Caco-2 (cell line): ENCODE measurements at regions of chr15 and their contacts with region 1.

Region 1: DNA sequence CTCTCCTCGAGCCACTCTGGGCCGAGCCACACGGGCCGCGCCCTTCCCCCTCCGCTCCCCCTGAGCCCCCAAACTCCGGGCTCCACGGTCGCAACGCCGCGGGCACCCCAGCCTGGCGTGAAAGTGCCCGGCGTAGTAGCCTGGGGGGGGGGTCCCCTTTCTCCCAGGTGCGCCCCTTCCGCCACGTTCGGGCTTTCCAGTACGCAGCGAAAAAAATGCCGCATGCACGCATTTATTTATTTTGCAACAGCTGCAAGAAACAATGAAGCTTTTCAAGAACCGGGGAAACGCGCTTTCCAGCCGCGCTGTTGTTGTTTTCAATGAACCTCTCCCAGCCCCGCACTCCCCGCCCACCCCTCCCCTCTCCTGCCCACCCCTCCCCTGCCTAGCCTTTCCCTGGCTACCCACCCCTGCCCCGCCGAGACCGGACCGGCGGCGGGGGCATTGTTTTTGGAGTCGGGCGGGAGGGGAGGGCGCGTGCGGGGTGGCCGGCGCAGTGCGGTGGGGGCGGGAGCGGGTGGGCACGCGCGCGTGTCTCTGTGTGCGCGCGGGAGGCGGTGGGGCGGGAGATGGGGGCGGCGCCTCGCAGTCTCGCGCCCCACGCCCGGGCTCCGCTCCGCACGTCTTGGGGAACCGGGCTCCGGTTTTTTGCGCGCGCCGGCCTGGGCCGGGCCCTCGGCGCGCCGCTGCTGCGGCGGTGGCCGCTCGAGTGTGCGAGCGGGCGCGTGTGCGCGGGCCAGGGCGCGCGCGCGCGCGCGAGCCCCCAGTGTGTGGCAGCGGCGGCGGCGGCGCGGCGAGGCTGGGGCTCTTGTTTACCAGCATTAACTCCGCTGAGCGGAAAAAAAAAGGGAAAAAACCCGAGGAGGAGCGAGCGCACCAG is at the start of gene IGF1R:
- DNase-seq: peak; percentile 81 to 93
- H3K4me3 ChIP-seq: peak within 1 kb of the TSS; percentile 83
- H3K4me3 Mint-ChIP-seq: peak within 1 kb of the TSS; percentile 93
- H3K27ac Mint-ChIP-seq: peak within 1 kb of the TSS; percentile 91
- H3K4me1 ChIP-seq: peaks cover 17% of the 10 kb centered on the region
- H3K4me1 Mint-ChIP-seq: peaks cover 11% of the 10 kb centered on the region
- H3K27me3 ChIP-seq: no peaks in the 10 kb centered on the region
- H3K27me3 Mint-ChIP-seq: peaks cover 5% of the 10 kb centered on the region
- CTCF ChIP-seq: no peak
- total RNA-seq, gene IGF1R: 51.6 and 57.4 TPM in 2 replicates

Region 2: DNA sequence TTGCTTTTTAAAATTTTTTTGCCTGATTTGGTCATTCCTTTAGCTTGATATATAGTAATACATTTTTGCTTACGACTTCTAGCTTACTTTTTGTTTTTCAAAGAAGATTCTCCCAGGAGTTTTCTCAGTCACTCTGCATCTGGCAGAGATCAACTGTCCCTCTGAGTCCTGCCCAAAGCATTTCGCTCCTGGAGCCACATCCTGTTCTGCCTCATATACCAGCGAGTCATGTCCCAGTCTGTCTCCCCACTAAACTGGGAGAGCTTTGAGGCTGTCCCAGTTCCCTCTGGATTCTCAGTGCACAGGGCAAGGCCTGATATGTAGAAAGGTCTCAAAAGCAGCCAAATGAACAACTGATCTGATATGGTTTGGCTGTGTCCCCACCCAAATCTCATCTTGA is 361.2 kb before region 1 on chr15:
- CTCF ChIA-PET with region 1: no interaction called
- POLR2A ChIA-PET with region 1: no interaction called
- intact Hi-C with region 1: no loop called
- DNase-seq: no peak
- H3K4me3 ChIP-seq: no peak overlapping the region
- H3K4me3 Mint-ChIP-seq: no peak overlapping the region
- H3K27ac Mint-ChIP-seq: no peak overlapping the region
- H3K4me1 ChIP-seq: no peaks in the 10 kb centered on the region
- H3K4me1 Mint-ChIP-seq: no peaks in the 10 kb centered on the region
- H3K27me3 ChIP-seq: no peaks in the 10 kb centered on the region
- H3K27me3 Mint-ChIP-seq: peaks cover 7% of the 10 kb centered on the region
- CTCF ChIP-seq: no peak

Region 3: DNA sequence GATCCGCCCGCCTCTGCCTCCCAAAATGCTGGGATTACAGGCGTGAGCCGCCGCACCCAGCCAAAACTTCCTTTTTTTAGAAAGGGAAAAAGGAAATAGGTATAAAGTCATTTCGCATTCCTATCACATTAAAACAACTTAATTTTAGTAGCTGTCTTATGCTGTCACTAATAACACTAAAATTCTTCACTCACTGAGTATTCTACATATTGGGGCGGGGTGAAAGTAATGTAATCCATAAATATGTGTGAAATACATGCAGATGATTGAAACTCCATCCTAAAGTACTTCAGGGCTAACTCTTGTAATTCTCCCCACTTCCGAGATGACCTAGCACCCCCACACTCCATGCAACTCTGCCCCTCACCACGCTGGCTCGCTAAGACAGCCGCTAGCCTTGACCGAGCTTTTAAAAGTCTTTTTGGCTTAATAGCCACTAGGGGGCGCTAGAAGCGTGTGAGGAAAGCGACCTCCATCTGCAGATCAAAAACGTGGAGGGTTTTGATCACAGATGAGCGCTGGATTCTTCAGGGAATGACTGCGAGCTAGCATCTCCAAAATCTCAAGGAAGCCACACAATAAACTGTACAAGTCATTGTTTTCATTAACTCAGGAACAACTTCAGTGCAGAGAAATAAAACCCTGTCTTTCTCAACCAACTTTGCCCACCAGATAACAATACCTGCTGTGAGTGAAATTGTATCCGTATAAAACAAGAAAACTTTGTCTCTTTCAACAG is 129.0 kb before region 1 on chr15:
- CTCF ChIA-PET with region 1: interaction called, 12 read pairs
- POLR2A ChIA-PET with region 1: no interaction called
- intact Hi-C with region 1: loop called (anchors 1 kb)
- DNase-seq: peak; percentile 55 to 70
- H3K4me3 ChIP-seq: no peak overlapping the region
- H3K4me3 Mint-ChIP-seq: no peak overlapping the region
- H3K27ac Mint-ChIP-seq: no peak overlapping the region
- H3K4me1 ChIP-seq: no peaks in the 10 kb centered on the region
- H3K4me1 Mint-ChIP-seq: peaks cover under 1% of the 10 kb centered on the region
- H3K27me3 ChIP-seq: no peaks in the 10 kb centered on the region
- H3K27me3 Mint-ChIP-seq: peaks cover 5% of the 10 kb centered on the region
- CTCF ChIP-seq: peak; percentile 78

Region 4: DNA sequence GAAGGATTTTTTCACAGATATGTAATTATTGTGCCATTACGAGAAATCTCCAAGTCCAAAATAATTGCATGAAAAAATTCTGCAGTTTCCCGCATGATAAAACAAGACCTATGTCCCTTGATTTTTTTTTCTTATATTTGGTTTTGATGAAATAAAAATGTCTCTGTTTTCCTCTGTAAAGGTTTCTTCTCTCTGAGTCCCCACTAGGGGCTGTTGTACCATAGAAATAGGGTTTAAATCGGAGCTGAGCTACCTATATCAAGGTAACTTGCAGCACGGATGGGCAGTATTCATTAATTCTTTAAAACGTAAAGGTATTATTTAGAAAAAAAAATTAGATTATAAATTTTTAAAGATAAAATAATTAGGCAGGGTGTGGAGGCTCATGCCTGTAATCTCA is 66.3 kb before region 1 on chr15:
- CTCF ChIA-PET with region 1: interaction called, 4 read pairs
- POLR2A ChIA-PET with region 1: no interaction called
- intact Hi-C with region 1: loop called (anchors 1 kb)
- DNase-seq: peak in 1 of 2 experiments; percentile 7
- H3K4me3 ChIP-seq: no peak overlapping the region
- H3K4me3 Mint-ChIP-seq: no peak overlapping the region
- H3K27ac Mint-ChIP-seq: no peak overlapping the region
- H3K4me1 ChIP-seq: no peaks in the 10 kb centered on the region
- H3K4me1 Mint-ChIP-seq: no peaks in the 10 kb centered on the region
- H3K27me3 ChIP-seq: no peaks in the 10 kb centered on the region; the same call in 1 of the 2 replicates
- H3K27me3 Mint-ChIP-seq: peaks cover 20% of the 10 kb centered on the region
- CTCF ChIP-seq: peak; percentile 33 to 49

Region 5: DNA sequence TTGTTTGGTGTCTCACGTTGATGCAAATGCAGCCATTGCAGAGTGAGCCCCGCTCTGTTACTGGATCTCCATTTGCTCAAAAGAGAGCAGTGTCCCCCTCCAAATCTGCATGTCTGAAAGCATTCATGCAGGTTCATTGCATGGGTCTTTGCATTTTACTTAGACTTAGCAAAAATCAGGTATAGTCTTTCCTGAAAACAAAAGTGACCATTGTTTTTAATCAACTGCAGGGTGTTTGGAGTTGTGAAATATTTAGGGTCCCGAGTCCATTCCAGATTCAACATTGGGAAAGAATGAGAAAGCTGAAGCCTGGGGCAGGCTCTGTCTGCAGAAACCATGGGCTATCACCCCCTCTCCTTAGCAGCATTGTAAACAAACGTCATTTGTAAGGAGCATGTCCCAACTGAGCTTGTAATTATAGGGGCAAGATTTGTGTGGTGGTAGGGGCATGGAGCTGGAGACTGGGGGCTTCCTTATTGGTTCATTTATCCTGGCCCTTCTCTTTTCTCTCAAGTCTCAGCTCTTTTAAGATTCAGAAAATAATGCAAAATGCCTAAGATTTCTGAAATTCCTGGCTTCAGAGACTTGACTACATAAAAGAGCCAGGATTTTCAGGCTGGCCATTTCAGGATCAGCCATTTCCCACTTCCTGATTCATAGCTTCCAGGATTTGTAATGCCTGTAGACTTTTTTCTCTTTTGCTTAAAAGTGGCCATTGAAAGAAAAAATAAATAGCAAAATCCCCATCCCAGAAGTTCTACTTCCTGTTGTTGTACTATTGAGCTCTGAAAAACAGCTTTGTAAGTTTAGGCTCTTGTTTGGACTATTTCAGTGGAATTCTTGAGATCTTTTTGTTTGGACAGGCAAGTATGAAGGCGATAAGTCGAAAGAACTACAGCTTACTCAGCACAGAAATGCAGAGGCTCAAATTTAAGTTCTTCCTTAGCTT is 23.3 kb after region 1 on chr15:
- CTCF ChIA-PET with region 1: no interaction called
- POLR2A ChIA-PET with region 1: interaction called, 3 read pairs
- intact Hi-C with region 1: loop called (anchors 2 kb)
- DNase-seq: peak in 1 of 2 experiments; percentile 60
- H3K4me3 ChIP-seq: no peak overlapping the region
- H3K4me3 Mint-ChIP-seq: peak overlapping the region; percentile 56
- H3K27ac Mint-ChIP-seq: peak overlapping the region; percentile 82
- H3K4me1 ChIP-seq: peaks cover 68% of the 10 kb centered on the region
- H3K4me1 Mint-ChIP-seq: peaks cover 42% of the 10 kb centered on the region
- H3K27me3 ChIP-seq: no peaks in the 10 kb centered on the region
- H3K27me3 Mint-ChIP-seq: no peaks in the 10 kb centered on the region
- CTCF ChIP-seq: no peak

Region 6: GRCh38 chr15:98785807-98786621 is 138.0 kb after region 1 on chr15:
- CTCF ChIA-PET with region 1: no interaction called
- POLR2A ChIA-PET with region 1: no interaction called
- intact Hi-C with region 1: no loop called
- DNase-seq: no peak
- H3K4me3 ChIP-seq: no peak overlapping the region
- H3K4me3 Mint-ChIP-seq: no peak overlapping the region
- H3K27ac Mint-ChIP-seq: no peak overlapping the region
- H3K4me1 ChIP-seq: peaks cover 36% of the 10 kb centered on the region
- H3K4me1 Mint-ChIP-seq: peaks cover 24% of the 10 kb centered on the region
- H3K27me3 ChIP-seq: no peaks in the 10 kb centered on the region
- H3K27me3 Mint-ChIP-seq: no peaks in the 10 kb centered on the region
- CTCF ChIP-seq: no peak

Region 7: DNA sequence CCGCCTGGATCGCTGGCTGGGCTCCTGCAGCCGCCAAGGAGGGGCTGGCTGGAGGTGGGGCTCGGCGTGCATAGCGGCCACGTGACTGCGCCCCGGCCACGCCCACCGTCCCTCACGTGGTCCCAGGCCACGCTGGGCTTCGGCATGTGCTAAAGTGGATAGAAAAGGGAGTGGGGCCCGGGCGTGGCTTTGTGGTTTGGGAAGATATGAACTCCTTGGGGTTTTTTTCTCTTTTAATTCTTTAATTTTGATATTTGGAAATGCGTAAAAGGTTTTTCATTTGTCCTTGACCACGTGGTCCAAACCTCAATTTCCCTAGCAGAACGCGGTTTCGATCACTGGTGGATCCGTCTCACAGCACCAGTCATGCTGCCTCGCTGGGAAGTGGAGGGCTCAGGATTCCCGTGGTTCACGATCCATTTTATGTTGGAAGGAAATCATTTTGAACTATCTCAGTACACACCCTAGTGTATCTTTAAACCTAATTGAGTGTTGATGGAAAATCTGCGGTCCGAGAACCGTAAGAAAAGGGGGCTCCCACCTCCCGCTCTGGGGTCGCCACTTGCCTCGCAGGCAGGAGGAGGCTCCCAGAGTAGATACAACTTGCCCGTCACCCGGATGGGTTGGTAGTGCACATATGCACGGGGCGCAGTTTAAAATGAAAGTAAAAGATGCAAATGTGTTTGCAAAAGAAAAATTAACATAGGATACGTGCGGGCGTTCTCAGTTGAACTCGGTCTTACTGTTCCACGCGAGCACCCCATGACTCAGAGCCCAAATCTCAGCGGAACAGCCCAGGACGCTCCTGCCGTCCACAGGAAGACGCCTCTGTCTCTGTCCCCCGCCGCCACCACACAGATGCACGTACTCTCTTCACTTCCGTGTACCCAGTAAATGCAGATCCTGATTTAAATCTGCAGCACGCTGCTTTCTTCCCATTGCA is 217.7 kb after region 1 on chr15:
- CTCF ChIA-PET with region 1: no interaction called
- POLR2A ChIA-PET with region 1: no interaction called
- intact Hi-C with region 1: loop called (anchors 5 kb)
- DNase-seq: peak; percentile 90 to 93
- H3K4me3 ChIP-seq: peak overlapping the region; percentile 71
- H3K4me3 Mint-ChIP-seq: peak overlapping the region; percentile 89
- H3K27ac Mint-ChIP-seq: peak overlapping the region; percentile 94
- H3K4me1 ChIP-seq: peaks cover 10% of the 10 kb centered on the region; the same call in 1 of the 2 replicates
- H3K4me1 Mint-ChIP-seq: peaks cover 26% of the 10 kb centered on the region
- H3K27me3 ChIP-seq: no peaks in the 10 kb centered on the region
- H3K27me3 Mint-ChIP-seq: no peaks in the 10 kb centered on the region
- CTCF ChIP-seq: no peak